ENCODE measurements at regions of chr3 and their contacts with region 1.

Region 1: DNA sequence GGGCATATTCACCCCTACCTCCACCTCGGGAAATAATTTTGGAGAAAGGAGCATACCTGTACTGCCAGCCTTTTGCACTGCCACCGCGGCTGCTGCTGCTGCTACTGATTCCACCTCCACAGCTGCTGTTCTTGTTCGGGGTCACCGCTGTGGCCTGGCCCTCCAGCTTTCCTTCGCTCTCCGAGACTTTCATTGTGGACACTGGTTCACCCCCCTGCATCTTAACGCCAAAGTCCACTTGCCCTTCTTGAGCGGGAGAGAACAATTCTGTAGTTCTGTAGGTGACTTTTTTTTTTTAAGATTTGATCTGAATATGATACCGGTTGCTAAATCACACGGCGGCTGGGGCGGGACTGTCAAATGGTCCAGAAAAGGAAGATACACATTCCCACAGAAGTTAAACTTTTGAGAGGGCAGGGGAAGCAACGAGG is 701 bp downstream of the OSBPL11 start:
- DNase-seq: peak; percentile 21
- H3K4me3 ChIP-seq: peak overlapping the region; percentile 88 to 98 (median 94)
- H3K27ac ChIP-seq: peak overlapping the region; percentile 79
- H3K4me1 ChIP-seq: peaks cover 16% of the 10 kb centered on the region
- H3K27me3 ChIP-seq: no peaks in the 10 kb centered on the region
- CTCF ChIP-seq: no peak

Region 2: DNA sequence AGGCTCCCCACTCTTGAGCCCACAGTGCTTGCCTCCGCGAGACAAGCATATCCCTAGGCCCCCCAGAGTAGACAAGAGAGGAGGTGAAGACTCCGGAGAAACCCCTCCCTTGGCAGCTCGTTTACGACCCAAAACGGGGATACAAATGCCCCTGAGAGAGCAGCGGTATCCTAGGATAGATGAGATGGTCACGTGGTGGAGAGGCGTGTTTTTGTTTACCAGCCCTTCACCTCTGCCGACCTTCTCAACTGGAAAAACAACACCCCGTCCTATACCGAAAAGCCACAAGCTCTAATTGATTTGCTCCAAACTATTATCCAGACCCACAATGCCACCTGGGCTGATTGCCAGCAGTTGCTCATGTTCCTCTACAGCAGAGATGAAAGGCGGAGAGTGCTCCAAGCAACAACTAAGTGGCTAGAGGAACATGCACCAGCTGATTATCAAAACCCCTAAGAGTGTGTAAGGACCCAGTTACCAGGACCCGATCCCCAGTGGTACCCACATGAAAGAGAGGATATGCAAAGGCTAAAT is 100.2 kb after region 1 on chr3:
- CTCF ChIA-PET with region 1: no interaction called
- dilution Hi-C with region 1: no loop called
- in situ Hi-C with region 1: no loop called
- intact Hi-C with region 1: loop called (anchors 5 kb)
- DNase-seq: no peak
- H3K4me3 ChIP-seq: no peak overlapping the region
- H3K27ac ChIP-seq: no peak overlapping the region
- H3K4me1 ChIP-seq: peaks cover 3% of the 10 kb centered on the region
- H3K27me3 ChIP-seq: no peaks in the 10 kb centered on the region
- CTCF ChIP-seq: no peak